ENCODE measurements at regions of chr5 and their contacts with region 1.

Region 1: GRCh38 chr5:159965031-159965837 is 43.7 kb upstream of the TTC1 start:
- DNase-seq: peak; percentile 37
- H3K4me3 ChIP-seq: no peak overlapping the region
- H3K27ac ChIP-seq: no peak overlapping the region
- H3K4me1 ChIP-seq: no peaks in the 10 kb centered on the region
- H3K27me3 ChIP-seq: peaks cover 5 to 10% of the 10 kb centered on the region in 2 experiments
- CTCF ChIP-seq: peak; percentile 50 to 57
- POLR2A ChIP-seq: no peak

Region 2: DNA sequence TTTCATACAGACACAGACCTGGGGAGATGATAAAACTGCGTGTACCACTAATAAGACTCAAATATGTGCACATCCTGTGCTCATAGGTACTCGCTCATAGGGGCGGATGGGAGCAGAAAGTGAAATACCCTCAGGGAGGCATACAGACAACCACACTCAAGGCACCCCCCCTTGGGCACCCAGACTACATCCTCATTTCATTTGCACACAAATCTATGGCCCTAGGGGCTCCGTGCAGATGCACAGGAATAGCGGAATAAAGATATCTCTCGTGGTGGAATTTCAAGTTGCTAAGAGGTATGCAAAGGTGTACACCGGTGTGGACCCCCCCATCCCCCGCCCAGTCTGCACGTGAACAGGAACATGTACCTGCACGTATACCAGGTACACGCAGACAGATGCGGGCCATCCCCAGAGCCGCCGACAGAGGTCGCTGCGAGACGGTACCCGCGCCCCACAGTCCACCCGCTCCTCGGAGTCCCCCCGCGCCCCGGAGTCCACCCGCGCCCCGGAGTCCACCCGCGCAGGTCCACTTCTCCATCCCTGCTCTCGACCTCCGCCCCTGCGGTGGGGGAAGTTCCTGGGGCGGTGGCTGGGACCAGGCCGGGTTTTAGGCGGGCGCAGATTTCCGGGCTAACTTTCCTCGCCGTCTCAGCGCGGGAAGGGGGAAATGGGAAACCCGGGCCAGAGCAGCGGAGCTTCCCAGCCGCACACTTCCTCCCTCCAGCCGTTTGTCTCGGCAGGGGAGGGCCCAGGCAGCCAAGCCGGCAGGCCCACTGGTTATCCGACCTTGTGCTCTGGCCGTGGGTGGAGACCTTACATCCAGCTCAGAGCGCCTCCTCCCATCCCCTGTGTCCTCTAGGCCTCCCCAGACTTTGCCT is 633.9 kb before region 1 on chr5:
- CTCF ChIA-PET with region 1: no interaction called
- POLR2A ChIA-PET with region 1: no interaction called
- dilution Hi-C with region 1: no loop called
- intact Hi-C with region 1: loop called (anchors 5 kb)
- DNase-seq: peak; percentile 30
- H3K4me3 ChIP-seq: peak overlapping the region in 2 of 3 experiments; percentile 8 to 21
- H3K27ac ChIP-seq: no peak overlapping the region
- H3K4me1 ChIP-seq: peaks cover 3% of the 10 kb centered on the region
- H3K27me3 ChIP-seq: peaks cover 0 to 3% of the 10 kb centered on the region in 2 experiments
- CTCF ChIP-seq: peak; percentile 64 to 81
- POLR2A ChIP-seq: no peak

Region 3: DNA sequence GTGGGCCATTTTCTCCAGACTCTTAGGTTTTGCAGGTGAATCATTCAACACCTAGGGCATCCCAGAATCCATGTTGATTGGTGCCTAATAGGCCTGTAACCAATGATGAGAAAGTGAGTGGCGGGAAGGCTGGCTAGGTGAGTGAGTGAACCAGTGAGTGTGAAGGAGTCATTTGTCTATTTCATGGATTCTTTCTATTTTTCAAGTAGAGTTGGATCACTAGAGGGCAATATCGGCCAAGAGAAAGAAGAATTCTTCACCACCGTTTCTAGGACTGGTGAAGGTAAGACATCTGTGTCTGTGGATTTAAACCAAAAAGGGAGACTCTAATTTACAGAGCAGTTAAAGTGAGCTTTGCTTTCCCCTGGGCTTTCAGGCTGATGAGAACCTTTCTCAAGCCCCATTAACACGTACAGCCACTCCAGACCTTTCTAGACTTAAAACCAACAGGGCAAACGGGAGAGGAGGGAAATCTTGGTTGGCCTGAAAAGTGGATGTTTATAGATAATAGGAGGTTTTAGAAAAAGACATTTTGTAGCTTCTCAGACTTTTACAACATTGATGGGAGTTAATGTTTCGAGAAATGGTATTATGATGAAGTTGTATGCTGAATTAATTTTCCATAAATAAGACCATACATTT is 520.7 kb before region 1 on chr5:
- CTCF ChIA-PET with region 1: no interaction called
- POLR2A ChIA-PET with region 1: no interaction called
- dilution Hi-C with region 1: no loop called
- intact Hi-C with region 1: loop called (anchors 5 kb)
- DNase-seq: peak; percentile 12
- H3K4me3 ChIP-seq: no peak overlapping the region
- H3K27ac ChIP-seq: no peak overlapping the region
- H3K4me1 ChIP-seq: no peaks in the 10 kb centered on the region
- H3K27me3 ChIP-seq: no peaks in the 10 kb centered on the region
- CTCF ChIP-seq: no peak
- POLR2A ChIP-seq: no peak

Region 4: DNA sequence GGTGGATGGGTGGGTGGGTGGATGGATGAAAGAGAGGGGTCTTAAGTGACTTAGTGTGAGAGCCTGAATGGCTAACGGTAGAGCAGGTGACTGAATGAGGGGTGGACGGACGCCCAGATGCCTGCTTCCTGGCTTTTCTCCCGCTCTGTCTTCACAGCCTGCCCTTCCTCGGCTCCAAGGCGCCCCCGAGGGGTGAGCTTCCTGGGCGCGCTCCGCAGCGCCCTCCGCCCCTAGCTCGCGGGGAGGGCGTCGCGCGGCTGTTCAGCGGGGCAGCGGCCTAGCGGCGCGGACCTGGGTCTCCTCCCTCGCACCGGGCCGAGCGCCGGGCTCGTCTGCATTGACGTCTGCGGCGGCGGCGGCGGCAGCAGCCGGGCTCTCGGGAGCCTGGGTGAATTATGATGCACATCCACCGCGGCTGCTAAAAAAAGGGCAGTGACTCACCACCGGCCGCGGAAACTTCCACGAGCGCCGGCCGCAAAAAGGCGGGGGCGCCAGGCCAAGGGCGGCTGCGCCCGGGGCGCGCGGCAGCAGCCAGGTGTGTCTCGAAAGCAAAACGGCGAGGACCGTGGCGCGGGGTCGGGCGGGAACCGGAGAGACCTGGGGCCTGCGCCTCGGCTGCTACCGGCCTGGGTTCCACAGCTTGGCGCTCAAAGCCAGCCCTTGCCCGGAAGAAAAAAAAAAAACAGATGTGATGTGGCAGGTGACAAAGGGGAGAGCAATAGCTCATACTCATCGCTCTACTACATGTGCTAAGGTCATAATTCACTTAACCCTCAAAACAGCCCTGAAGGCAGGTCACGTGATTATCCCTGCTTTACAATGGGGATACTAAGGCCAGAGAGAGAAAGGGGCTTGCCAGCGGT is 191.9 kb before region 1 on chr5:
- CTCF ChIA-PET with region 1: no interaction called
- POLR2A ChIA-PET with region 1: no interaction called
- dilution Hi-C with region 1: no loop called
- intact Hi-C with region 1: loop called (anchors 10 kb)
- DNase-seq: peak; percentile 41
- H3K4me3 ChIP-seq: peak overlapping the region in 1 of 3 experiments; percentile 16
- H3K27ac ChIP-seq: no peak overlapping the region
- H3K4me1 ChIP-seq: no peaks in the 10 kb centered on the region
- H3K27me3 ChIP-seq: no peaks in the 10 kb centered on the region
- CTCF ChIP-seq: no peak
- POLR2A ChIP-seq: no peak